ENCODE measurements at regions of chr1 and their contacts with region 1.

Region 1: DNA sequence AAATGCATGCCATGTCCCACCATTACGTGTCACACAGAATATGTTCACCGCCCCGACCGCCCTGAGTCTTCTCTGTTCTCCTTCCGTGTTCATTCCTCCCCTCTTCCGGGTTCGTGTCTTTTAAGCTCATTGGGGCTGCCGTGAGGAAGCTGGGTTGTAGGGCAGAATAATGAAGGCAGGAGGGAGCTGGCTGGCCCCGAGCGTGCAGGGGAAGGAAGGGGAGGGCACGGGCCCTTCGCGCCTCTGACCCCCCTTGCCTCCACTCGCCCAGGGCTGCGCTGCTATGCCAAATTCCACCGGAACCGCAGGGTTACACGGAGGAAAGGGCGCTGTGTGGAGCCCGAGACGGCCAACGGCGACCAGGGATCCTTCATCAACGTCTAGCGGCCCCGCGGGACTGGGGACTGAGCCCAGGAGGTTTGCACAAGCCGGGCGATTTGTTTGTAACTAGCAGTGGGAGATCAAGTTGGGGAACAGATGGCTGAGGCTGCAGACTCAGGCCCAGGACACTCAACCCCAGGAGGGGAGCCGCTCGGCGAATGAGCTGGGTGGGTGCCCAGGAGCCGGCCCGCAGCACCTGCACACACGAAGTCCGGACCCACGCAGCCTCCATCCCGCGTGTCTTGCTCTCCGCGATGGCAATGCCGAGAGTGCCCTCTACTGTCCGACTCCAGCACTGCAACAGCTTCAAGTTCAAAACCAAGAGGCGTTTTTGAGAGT is 16.5 kb upstream of the AGTRAP start:
- DNase-seq: peak; percentile 81 to 82
- H3K4me3 ChIP-seq: peak overlapping the region; percentile 23 to 28
- H3K27ac ChIP-seq: no peak overlapping the region
- H3K4me1 ChIP-seq: no peaks in the 10 kb centered on the region
- H3K27me3 ChIP-seq: no peaks in the 10 kb centered on the region
- CTCF ChIP-seq: peak; percentile 90 to 95 (median 92)
- POLR2A ChIP-seq: no peak

Region 2: DNA sequence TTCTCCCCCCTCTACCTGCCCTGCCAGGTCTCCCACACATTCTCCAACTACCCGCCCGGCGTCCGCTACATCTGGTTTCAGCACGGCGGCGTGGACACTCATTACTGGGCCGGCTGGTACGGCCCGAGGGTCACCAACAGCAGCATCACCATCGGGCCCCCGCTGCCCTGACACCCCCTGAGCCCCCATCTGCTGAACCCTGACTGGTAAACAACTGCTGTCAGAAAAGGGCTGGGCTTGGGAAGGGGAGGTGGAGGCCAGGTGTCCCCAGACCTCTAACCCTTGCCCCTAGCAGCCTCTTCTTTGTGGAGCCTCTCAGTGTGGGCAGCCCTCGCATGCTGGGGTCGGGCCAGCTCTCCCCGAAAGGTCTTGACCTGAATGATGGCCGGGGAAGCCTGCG is 58.4 kb before region 1 on chr1:
- intact Hi-C with region 1: loop called (anchors 10 kb)
- DNase-seq: no peak
- H3K4me3 ChIP-seq: no peak overlapping the region
- H3K27ac ChIP-seq: no peak overlapping the region
- H3K4me1 ChIP-seq: no peaks in the 10 kb centered on the region
- H3K27me3 ChIP-seq: no peaks in the 10 kb centered on the region
- CTCF ChIP-seq: no peak
- POLR2A ChIP-seq: no peak